CD4-positive, alpha-beta T cell (primary cell): ENCODE measurements at regions of chr6 and their contacts with region 1.

Region 1: GRCh38 chr6:108163267-108163643 is 2.6 kb upstream of the NR2E1 start:
- DNase-seq: peak in 1 of 14 experiments; percentile 26
- ATAC-seq: peak; percentile 37
- H3K4me3 ChIP-seq: no peak overlapping the region
- H3K4me3 Mint-ChIP-seq: no peak overlapping the region
- H3K27ac ChIP-seq: no peak overlapping the region
- H3K27ac Mint-ChIP-seq: no peak overlapping the region
- H3K4me1 ChIP-seq: peaks cover 35% of the 10 kb centered on the region
- H3K4me1 Mint-ChIP-seq: peaks cover 40% of the 10 kb centered on the region
- H3K27me3 ChIP-seq: peaks cover 77 to 100% of the 10 kb centered on the region in 2 experiments
- H3K27me3 Mint-ChIP-seq: peaks cover 97% of the 10 kb centered on the region
- CTCF ChIP-seq: no peak

Region 2: DNA sequence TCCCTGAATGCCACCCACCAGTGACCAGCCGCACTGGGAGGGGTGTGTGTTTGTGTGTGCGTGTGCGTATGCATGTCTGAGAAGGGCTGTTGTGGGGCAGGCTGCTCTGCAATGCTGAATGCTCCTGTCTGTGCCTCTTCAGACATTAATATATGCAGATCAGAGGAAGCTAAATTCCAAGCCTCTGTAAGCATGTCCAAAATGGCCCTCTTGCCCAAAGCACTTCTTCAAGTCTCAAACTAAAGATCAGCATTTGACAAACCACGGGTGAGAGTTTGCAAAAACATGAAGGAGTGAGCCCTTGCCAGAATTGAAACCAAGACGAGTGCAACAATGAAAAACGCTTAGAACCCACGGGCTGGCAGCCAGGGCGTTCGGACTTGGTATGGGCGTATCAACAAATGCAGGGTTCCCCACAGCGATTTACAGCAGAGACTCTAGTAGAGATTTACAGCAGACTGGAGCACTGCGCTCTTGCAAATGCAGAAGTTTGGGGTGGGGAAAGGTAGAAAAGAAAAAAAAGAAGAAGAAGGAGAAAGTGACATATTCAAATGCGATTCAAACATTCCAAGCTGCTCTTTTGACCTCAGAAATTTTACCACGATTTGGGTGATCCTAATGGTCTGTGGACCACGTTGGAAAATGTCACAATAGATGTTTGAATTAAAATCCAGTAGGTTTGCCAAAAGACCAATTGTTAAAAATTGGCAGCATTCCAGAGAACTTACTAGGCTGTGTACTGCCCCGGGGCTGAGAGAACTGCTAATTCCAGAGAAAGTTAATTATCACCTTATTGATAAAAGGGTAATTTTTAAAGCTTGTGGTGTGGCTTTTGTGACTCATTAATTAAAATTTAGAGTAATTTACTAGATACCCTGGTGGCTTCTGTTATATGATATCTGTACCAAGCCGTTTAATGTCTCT is 342.7 kb before region 1 on chr6:
- CTCF ChIA-PET with region 1: no interaction called
- POLR2A ChIA-PET with region 1: no interaction called
- intact Hi-C with region 1: no loop called
- DNase-seq: peak; percentile 39 to 69 (median 49)
- ATAC-seq: no peak
- H3K4me3 ChIP-seq: peak overlapping the region; percentile 74
- H3K4me3 Mint-ChIP-seq: peak overlapping the region; percentile 96
- H3K27ac ChIP-seq: peak overlapping the region; percentile 87 to 88
- H3K27ac Mint-ChIP-seq: peak overlapping the region; percentile 96
- H3K4me1 ChIP-seq: peaks cover 64% of the 10 kb centered on the region
- H3K4me1 Mint-ChIP-seq: peaks cover 87% of the 10 kb centered on the region
- H3K27me3 ChIP-seq: no peaks in the 10 kb centered on the region
- H3K27me3 Mint-ChIP-seq: no peaks in the 10 kb centered on the region
- CTCF ChIP-seq: no peak

Region 3: DNA sequence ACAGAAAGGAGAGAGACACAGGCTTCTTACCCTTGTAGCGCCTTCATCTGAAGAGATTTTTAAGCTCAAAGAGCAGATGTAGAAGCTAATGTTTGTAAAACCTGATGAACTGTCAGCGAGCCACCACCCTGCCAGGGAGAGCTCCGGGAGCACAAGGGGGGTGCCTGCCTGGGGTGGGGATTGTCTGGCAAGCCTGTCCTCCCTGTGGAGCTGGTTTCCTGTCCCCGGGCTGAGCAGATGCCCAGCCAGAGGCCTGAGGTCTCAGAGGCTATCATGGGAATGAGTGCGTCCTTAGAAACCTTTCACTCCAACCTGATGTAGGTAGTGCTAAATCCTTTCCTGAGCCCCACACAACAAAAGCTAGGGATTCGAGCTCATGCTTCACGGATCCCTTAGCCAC is 39.3 kb before region 1 on chr6:
- CTCF ChIA-PET with region 1: no interaction called
- POLR2A ChIA-PET with region 1: no interaction called
- intact Hi-C with region 1: loop called in 1 of 2 experiments (anchors 5 kb)
- DNase-seq: no peak
- ATAC-seq: no peak
- H3K4me3 ChIP-seq: no peak overlapping the region
- H3K4me3 Mint-ChIP-seq: no peak overlapping the region
- H3K27ac ChIP-seq: no peak overlapping the region
- H3K27ac Mint-ChIP-seq: no peak overlapping the region
- H3K4me1 ChIP-seq: peaks cover 10% of the 10 kb centered on the region
- H3K4me1 Mint-ChIP-seq: peaks cover 13% of the 10 kb centered on the region
- H3K27me3 ChIP-seq: peaks cover 55 to 95% of the 10 kb centered on the region in 2 experiments
- H3K27me3 Mint-ChIP-seq: peaks cover 99% of the 10 kb centered on the region
- CTCF ChIP-seq: no peak

Region 4: DNA sequence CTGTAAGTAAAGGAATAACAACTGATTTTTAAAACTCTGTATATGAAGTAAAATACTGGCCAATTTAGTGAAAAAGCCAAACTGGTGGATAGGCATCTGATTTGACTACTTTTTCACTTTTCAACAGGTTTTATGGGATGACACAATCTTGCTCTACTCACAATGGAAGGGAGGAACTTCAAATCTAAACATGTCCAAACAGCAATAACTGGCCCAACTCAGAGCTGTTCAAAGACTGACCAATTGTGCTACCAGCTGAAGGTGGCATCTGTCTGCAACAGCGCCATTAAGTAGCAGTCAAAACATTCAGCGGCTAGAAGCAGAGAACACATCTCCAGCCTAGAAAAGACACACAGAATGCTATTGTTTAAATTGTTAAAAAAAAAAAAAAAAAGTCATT is 886.8 kb after region 1 on chr6:
- CTCF ChIA-PET with region 1: no interaction called
- POLR2A ChIA-PET with region 1: no interaction called
- intact Hi-C with region 1: no loop called
- DNase-seq: no peak
- ATAC-seq: no peak
- H3K4me3 ChIP-seq: no peak overlapping the region
- H3K4me3 Mint-ChIP-seq: no peak overlapping the region
- H3K27ac ChIP-seq: no peak overlapping the region
- H3K27ac Mint-ChIP-seq: no peak overlapping the region
- H3K4me1 ChIP-seq: peaks cover 13% of the 10 kb centered on the region
- H3K4me1 Mint-ChIP-seq: peaks cover 38% of the 10 kb centered on the region
- H3K27me3 ChIP-seq: no peaks in the 10 kb centered on the region
- H3K27me3 Mint-ChIP-seq: no peaks in the 10 kb centered on the region
- CTCF ChIP-seq: no peak